Posterior vena cava (tissue), 2 donors: ENCODE measurements at regions of chr12 and their contacts with region 1.

Region 1: DNA sequence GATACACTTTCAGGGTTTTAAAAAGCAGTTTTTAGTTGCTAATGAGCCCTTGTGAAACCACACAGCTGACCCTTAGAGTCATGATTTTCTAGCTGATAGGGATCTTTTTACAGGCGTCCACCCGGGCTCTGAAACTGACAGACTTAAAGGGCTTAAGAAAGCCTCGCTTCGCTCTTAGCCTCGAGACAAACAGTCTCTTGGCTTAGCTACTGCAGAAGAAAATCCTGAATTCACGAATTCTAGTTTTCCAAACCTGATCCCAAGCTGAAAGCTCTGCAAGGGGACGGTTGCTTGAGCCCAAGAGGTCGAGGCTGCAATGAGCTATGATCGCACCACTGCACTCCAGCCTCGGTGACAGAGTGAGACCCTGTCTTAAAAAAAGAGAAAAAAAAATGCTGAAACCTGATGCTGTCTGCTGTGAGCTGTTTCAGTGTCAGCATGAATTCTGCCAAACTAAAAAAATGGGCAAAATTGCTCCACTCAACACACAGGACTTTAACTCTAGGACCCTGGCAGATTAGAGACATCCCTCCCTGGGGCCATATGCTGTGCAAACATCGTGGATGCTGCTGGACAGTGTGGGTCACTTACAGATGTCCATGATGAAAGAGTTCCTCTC is 3.1 kb upstream of the HPD start:
- DNase-seq: no peak

Region 2: DNA sequence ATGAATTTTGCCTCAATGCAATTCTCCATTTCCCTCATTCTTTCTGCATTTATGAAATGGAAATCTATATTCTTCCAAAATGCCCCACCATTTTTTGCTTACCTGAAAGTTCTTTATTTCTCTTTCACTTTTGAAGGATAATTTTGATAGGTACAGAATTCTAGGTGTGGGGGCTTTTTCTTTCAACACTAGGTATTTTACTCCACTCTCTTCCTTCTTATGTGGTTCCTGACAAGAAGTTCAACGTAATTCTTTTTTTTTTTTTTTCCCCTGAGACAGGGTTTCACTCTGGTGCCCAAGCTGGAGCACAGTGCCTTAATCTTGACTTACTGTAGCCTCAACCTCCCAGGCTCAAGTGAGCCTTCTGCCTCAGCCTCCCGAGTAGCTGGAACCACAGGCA is 796.4 kb before region 1 on chr12:
- intact Hi-C with region 1: loop called in 1 of 2 experiments (anchors 5 kb)
- DNase-seq: no peak

Region 3: GRCh38 chr12:121933522-121934308 is 72.0 kb after region 1 on chr12:
- intact Hi-C with region 1: no loop called
- DNase-seq: no peak